Caco-2 (cell line): ENCODE measurements at regions of chr6 and their contacts with region 1.

Region 1: GRCh38 chr6:57048577-57048976 is 2.1 kb downstream of the KIAA1586 start:
- DNase-seq: no peak
- H3K4me3 ChIP-seq: no peak overlapping the region
- H3K4me3 Mint-ChIP-seq: no peak overlapping the region
- H3K27ac Mint-ChIP-seq: no peak overlapping the region
- H3K4me1 ChIP-seq: 0 out of 2 replicates have a peak, but pooled peaks cover 5% of the 10 kb centered on the region
- H3K4me1 Mint-ChIP-seq: no peaks in the 10 kb centered on the region
- H3K27me3 ChIP-seq: no peaks in the 10 kb centered on the region
- H3K27me3 Mint-ChIP-seq: peaks cover 4% of the 10 kb centered on the region
- CTCF ChIP-seq: no peak

Region 2: GRCh38 chr6:56963793-56964192 is 84.8 kb before region 1 on chr6:
- CTCF ChIA-PET with region 1: no interaction called
- POLR2A ChIA-PET with region 1: interaction called, 10 read pairs
- intact Hi-C with region 1: no loop called
- DNase-seq: no peak
- H3K4me3 ChIP-seq: no peak overlapping the region
- H3K4me3 Mint-ChIP-seq: no peak overlapping the region
- H3K27ac Mint-ChIP-seq: no peak overlapping the region
- H3K4me1 ChIP-seq: no peaks in the 10 kb centered on the region
- H3K4me1 Mint-ChIP-seq: no peaks in the 10 kb centered on the region
- H3K27me3 ChIP-seq: no peaks in the 10 kb centered on the region; the same call in 1 of the 2 replicates
- H3K27me3 Mint-ChIP-seq: peaks cover 6% of the 10 kb centered on the region
- CTCF ChIP-seq: no peak

Region 3: GRCh38 chr6:57089687-57090460 is 41.3 kb after region 1 on chr6 and contains the start of gene ZNF451:
- CTCF ChIA-PET with region 1: no interaction called
- POLR2A ChIA-PET with region 1: no interaction called
- intact Hi-C with region 1: loop called (anchors 5 kb)
- DNase-seq: peak; percentile 97
- H3K4me3 ChIP-seq: peak within 1 kb of the TSS; percentile 71
- H3K4me3 Mint-ChIP-seq: peak within 1 kb of the TSS; percentile 68
- H3K27ac Mint-ChIP-seq: peak within 1 kb of the TSS; percentile 46
- H3K4me1 ChIP-seq: peaks cover 38% of the 10 kb centered on the region
- H3K4me1 Mint-ChIP-seq: peaks cover 38% of the 10 kb centered on the region
- H3K27me3 ChIP-seq: no peaks in the 10 kb centered on the region
- H3K27me3 Mint-ChIP-seq: no peaks in the 10 kb centered on the region
- CTCF ChIP-seq: no peak
- total RNA-seq, gene ZNF451: 57.6 and 62.3 TPM in 2 replicates

Region 4: GRCh38 chr6:57147955-57148858 is 99.6 kb after region 1 on chr6:
- CTCF ChIA-PET with region 1: no interaction called
- POLR2A ChIA-PET with region 1: no interaction called
- intact Hi-C with region 1: no loop called
- DNase-seq: no peak
- H3K4me3 ChIP-seq: no peak overlapping the region
- H3K4me3 Mint-ChIP-seq: no peak overlapping the region
- H3K27ac Mint-ChIP-seq: no peak overlapping the region
- H3K4me1 ChIP-seq: no peaks in the 10 kb centered on the region
- H3K4me1 Mint-ChIP-seq: peaks cover 6% of the 10 kb centered on the region
- H3K27me3 ChIP-seq: no peaks in the 10 kb centered on the region
- H3K27me3 Mint-ChIP-seq: no peaks in the 10 kb centered on the region
- CTCF ChIP-seq: no peak